Activated B cell treated with CpG ODN at 0.5 μM for 24 hours (primary cell): ENCODE measurements at regions of chr17 and their contacts with region 1.

Region 1: DNA sequence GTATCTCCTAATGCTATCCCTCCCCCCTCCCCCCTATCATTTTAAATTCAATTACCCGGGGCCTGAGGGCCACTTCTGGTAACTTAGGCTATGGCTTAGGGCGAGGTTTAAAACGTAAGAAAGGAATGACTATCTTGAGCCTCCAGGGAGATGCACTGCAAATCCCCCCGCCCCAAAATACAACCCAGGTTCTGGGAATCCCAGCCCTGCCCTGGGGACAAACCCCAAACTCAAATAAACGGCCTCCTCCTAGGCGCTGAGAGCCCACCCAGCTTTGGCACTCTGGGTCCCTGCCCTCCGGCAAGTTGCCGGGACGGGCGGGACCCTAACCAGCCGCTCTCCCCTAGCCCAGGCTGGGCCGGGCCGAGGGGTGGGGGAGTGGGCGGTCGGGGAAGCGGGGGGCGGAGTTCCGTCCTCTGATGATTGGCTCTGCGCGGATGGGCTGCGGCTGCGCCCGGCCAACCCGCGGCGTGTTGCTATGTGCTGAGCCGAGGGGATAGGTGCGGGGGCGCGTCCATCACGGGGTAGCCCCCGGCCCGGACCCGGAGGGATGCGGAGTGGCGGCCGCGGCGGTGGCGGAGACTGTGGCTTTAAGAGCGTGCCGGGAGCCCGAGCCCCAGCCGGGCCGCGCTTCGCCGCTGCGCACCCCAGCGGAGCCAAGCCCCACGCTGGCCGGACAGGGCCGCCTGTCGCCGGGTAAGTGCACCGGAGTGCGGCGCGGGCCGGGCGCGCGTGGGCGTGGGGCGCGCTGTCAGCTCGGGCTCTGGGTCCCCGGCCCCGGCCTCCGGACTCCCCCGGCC is at the start of gene YPEL2:
- DNase-seq: peak; percentile 86
- ATAC-seq: peak; percentile 95
- H3K4me3 Mint-ChIP-seq: peak within 1 kb of the TSS; percentile 90
- H3K27ac Mint-ChIP-seq: peak within 1 kb of the TSS; percentile 81
- H3K4me1 Mint-ChIP-seq: peaks cover 60% of the 10 kb centered on the region
- H3K27me3 Mint-ChIP-seq: no peaks in the 10 kb centered on the region
- CTCF ChIP-seq: no peak
- total RNA-seq, gene YPEL2: 18.3 and 19.5 TPM in 2 replicates

Region 2: GRCh38 chr17:59347975-59348391 is 16.7 kb after region 1 on chr17:
- CTCF ChIA-PET with region 1: interaction called, 9 read pairs
- POLR2A ChIA-PET with region 1: interaction called, 14 read pairs
- intact Hi-C with region 1: loop called (anchors 1 kb)
- DNase-seq: no peak
- ATAC-seq: no peak
- H3K4me3 Mint-ChIP-seq: no peak overlapping the region
- H3K27ac Mint-ChIP-seq: peak overlapping the region; percentile 68
- H3K4me1 Mint-ChIP-seq: peaks cover 83% of the 10 kb centered on the region
- H3K27me3 Mint-ChIP-seq: no peaks in the 10 kb centered on the region
- CTCF ChIP-seq: no peak

Region 3: DNA sequence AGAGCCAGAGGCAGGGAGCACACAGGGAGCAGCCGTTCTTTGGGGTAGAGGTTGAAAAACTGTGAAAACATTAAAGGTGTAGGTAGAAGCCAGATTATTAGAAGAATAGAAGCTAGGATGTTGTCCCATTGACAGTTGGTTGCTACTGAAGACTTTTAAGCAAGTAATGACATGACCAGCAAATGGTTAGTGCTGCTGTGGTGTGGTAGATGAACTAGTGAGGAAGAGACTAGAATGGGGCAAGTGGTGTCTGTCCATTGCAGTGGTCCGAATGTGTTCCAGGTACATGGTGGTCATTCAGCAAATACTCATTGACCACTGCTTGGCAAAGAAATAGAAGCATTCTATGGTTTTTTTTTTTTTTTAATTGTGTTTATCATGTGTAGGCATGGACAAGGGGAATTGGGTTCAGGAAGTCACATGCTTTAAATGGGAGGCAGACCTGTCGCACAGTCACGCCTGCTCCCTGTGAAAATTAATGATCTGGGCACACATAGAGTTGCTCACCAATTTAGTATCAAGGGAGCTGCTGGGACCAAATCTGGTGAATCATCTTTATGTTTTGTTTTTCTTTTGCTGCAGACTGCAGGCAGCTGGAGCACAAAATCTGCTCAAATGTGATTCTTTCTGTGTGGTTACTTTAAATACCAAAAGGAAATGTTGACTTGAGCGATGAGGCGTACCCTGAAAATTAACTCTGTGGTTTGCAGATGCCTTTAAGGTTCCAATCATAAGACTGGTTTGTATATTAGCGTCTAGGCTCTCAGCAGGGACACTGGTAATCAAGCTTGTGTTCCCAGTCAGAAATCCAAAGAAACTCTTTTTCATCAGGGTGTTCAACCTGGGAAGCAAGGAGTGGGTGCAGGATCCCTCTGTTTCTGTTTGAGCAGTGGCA is 30.8 kb after region 1 on chr17:
- CTCF ChIA-PET with region 1: interaction called, 15 read pairs
- POLR2A ChIA-PET with region 1: interaction called, 56 read pairs
- intact Hi-C with region 1: loop called (anchors 1 kb)
- DNase-seq: no peak
- ATAC-seq: peak; percentile 77
- H3K4me3 Mint-ChIP-seq: peak overlapping the region; percentile 42
- H3K27ac Mint-ChIP-seq: peak overlapping the region; percentile 87
- H3K4me1 Mint-ChIP-seq: peaks cover 84% of the 10 kb centered on the region
- H3K27me3 Mint-ChIP-seq: no peaks in the 10 kb centered on the region
- CTCF ChIP-seq: no peak

Region 4: DNA sequence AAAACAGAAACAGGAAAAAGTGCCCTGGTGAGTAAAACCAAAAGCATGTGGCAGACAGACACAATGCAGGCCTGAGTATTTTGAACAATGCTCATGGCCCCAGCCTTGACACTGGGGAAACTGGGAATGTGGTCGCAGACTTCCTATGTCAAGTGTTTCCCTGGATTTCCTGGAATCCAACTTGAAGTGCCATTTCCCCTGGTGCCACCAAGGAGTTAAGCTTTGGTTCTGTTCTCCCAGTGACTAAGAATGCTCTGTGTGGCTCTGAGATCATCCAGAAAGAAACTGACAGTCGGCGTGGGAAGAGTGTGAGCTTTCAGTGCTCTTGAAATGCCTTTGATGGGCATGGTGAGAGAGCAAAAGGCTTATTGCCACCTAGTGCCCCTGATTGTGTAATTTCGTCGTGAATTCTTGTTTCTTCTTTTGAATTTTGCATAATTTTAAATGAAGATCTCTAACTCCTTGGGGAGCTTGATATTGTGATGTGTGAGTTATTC is 96.1 kb after region 1 on chr17:
- CTCF ChIA-PET with region 1: interaction called, 28 read pairs
- POLR2A ChIA-PET with region 1: no interaction called
- intact Hi-C with region 1: no loop called
- DNase-seq: no peak
- ATAC-seq: no peak
- H3K4me3 Mint-ChIP-seq: no peak overlapping the region
- H3K27ac Mint-ChIP-seq: no peak overlapping the region
- H3K4me1 Mint-ChIP-seq: no peaks in the 10 kb centered on the region
- H3K27me3 Mint-ChIP-seq: no peaks in the 10 kb centered on the region
- CTCF ChIP-seq: no peak

Region 5: GRCh38 chr17:59521204-59522126 is 190.1 kb after region 1 on chr17:
- CTCF ChIA-PET with region 1: interaction called, 9 read pairs
- POLR2A ChIA-PET with region 1: no interaction called
- intact Hi-C with region 1: loop called (anchors 1 kb)
- DNase-seq: peak; percentile 43
- ATAC-seq: peak; percentile 71
- H3K4me3 Mint-ChIP-seq: no peak overlapping the region
- H3K27ac Mint-ChIP-seq: no peak overlapping the region
- H3K4me1 Mint-ChIP-seq: peaks cover 4% of the 10 kb centered on the region
- H3K27me3 Mint-ChIP-seq: peaks cover 9% of the 10 kb centered on the region
- CTCF ChIP-seq: peak; percentile 81